ENCODE measurements at regions of chr19 and their contacts with region 1.

Region 1: GRCh38 chr19:51108066-51108804 is at the start of gene CTU1:
- DNase-seq: peak; percentile 97 to 100 (median 99)
- H3K4me3 ChIP-seq: peak within 1 kb of the TSS; percentile 59 to 96 (median 84)
- H3K27ac ChIP-seq: peak within 1 kb of the TSS in 55 of 59 donors; percentile 5 to 95 (median 77)
- H3K27me3 ChIP-seq: peaks cover 0 to 4% (median 0%) of the 10 kb centered on the region in 45 donors
- CTCF ChIP-seq: peak in 41 of 56 donors; percentile 5 to 64 (median 36)
- total RNA-seq, gene CTU1: 4.6 to 14.6 (median 7.5) TPM

Region 2: GRCh38 chr19:50025024-50025789 is 1083.0 kb before region 1 on chr19 and contains the start of gene VRK3:
- intact Hi-C with region 1: loop called in 1 of 2 experiments (anchors 10 kb)
- DNase-seq: peak; percentile 99 to 100 (median 99)
- H3K4me3 ChIP-seq: peak within 1 kb of the TSS; percentile 61 to 100 (median 96)
- H3K27ac ChIP-seq: peak within 1 kb of the TSS; percentile 24 to 97 (median 88)
- H3K27me3 ChIP-seq: no peaks in the 10 kb centered on the region
- CTCF ChIP-seq: peak in 37 of 56 donors; percentile 4 to 47 (median 25)
- total RNA-seq, gene VRK3: 38.8 to 67.5 (median 53.3) TPM

Region 3: GRCh38 chr19:50329146-50329925 is 778.9 kb before region 1 on chr19 and contains the start of gene KCNC3:
- intact Hi-C with region 1: loop called in 1 of 2 experiments (anchors 2 kb)
- DNase-seq: peak; percentile 97 to 100 (median 100)
- H3K4me3 ChIP-seq: peak within 1 kb of the TSS; percentile 39 to 84 (median 58)
- H3K27ac ChIP-seq: peak within 1 kb of the TSS in 58 of 59 donors; percentile 38 to 93 (median 82)
- H3K27me3 ChIP-seq: no peaks in the 10 kb centered on the region
- CTCF ChIP-seq: peak in 17 of 56 donors; percentile 5 to 50 (median 20)
- total RNA-seq, gene KCNC3: 15.1 to 99.8 (median 56.4) TPM

Region 4: DNA sequence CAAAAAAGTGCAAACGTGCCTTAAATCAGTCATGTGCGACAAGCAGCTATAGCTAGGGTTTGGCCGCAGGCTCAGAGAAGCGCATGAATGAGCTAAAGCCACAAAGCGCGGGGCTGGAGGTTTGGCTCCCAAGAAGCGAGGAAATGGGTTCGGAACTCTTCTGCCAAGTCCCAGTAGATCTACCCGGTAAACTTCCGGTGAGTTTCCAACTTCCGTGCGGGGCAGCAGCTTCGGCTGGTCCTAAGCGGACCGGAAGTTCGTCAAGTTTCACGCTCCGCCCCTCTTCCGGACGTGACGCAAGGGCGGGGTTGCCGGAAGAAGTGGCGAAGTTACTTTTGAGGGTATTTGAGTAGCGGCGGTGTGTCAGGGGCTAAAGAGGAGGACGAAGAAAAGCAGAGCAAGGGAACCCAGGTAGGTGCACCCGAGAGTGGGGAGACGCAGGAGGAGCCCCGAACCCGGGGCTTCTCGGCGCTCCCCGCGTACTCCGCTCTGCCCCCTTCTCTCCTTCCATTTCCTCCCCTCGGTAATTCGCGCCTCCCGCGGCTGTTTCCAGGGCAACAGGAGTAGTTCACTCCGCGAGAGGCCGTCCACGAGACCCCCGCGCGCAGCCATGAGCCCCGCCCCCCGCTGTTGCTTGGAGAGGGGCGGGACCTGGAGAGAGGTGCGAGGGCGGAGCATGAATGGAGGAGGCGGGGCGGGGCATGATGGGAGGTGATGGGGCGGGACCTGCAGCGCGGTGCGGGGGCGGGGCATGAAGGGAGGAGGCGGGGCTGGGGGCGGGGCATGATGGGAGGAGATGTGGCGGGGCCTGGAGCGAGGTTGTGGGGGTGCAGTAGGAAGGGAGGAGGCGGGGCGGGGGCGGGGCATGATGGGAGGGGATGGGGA is 731.8 kb before region 1 on chr19 and contains the start of gene NR1H2:
- intact Hi-C with region 1: loop called in 1 of 2 experiments (anchors 5 kb)
- DNase-seq: peak; percentile 94 to 97 (median 96)
- H3K4me3 ChIP-seq: peak within 1 kb of the TSS; percentile 73 to 100 (median 98)
- H3K27ac ChIP-seq: peak within 1 kb of the TSS; percentile 86 to 100 (median 97)
- H3K27me3 ChIP-seq: no peaks in the 10 kb centered on the region
- CTCF ChIP-seq: peak in 36 of 56 donors; percentile 3 to 57 (median 32)
- total RNA-seq, gene NR1H2: 47.4 to 83.8 (median 64.3) TPM

Region 5: DNA sequence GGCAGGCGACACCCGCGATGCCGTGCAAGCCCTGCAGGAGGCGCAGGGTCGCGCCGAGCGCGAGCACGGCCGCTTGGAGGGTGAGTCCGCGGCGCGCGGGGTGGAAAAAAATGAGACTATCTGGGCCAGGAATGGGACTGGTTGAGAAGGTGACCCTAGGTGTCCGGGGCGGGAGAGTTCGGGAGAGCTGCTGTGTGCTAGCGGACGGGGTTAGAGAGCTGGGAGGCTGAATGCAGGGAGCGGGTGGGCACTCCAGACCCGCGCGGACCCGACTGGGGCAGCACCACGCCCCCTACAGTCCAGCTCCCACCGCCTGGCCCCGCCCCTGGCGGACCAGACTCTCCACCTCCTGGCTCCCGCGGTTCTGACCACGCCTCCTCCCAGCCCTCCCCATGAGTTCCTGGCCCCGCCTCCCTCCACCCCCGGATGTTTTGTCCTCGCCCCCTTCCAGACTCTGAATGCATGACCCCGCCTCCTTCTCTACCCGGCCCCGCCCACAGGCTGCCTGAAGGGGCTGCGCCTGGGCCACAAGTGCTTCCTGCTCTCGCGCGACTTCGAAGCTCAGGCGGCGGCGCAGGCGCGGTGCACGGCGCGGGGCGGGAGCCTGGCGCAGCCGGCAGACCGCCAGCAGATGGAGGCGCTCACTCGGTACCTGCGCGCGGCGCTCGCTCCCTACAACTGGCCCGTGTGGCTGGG is 383.6 kb before region 1 on chr19:
- intact Hi-C with region 1: loop called in 1 of 2 experiments (anchors 5 kb)
- DNase-seq: peak; percentile 99 to 100 (median 99)
- H3K4me3 ChIP-seq: peak overlapping the region; percentile 60 to 93 (median 84)
- H3K27ac ChIP-seq: peak overlapping the region in 57 of 59 donors; percentile 41 to 90 (median 78)
- H3K27me3 ChIP-seq: no peaks in the 10 kb centered on the region
- CTCF ChIP-seq: peak; percentile 40 to 95 (median 72)

Region 6: DNA sequence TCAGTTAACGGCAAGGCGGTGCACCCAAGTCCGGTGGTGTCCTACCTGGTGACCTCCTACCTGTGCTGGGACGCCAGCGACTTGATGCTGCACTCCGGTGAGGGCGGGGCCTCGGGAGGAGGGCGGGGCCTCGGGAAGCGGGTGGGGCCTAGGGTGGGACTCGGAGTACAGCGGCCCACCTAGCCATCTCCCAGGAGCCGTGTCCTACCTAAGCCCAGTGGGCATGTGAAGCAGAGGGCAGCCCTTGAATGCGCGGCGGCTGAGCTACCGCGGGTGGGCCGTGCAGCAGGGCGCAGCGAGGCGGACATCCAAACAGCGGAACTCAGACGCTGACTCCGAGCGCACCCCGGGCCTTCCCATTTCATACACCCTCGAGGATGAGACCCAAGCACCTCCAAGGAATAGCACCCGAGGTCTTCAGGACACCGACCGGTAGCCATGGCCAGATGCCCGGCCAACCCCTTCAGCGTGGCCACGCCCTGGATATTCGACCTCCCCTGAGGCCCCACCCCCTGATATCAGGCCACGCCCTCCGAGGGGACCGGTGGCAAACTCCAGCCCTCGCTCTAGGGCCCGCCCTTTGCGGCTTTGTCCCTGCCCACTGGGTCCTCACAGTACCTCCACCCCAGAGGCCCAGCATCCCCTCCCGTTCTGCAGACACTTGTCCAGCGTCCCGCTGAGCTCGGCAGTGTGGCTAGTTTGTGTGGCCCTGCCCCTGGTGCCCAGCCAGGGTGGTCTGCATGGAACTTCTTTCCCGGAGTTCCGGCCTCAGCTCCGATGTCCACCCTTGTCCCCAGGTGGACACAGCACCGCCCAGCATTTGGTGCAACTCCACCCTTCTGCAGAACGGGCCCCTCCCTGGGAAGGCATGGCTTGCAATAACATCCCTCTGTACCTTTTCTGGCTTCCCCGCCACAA is 290.0 kb before region 1 on chr19:
- intact Hi-C with region 1: no loop called
- DNase-seq: no peak
- H3K4me3 ChIP-seq: peak overlapping the region in 27 of 59 donors; percentile 2 to 55 (median 24)
- H3K27ac ChIP-seq: no peak overlapping the region
- H3K27me3 ChIP-seq: peaks cover 0 to 74% (median 51%) of the 10 kb centered on the region in 45 donors
- CTCF ChIP-seq: no peak

Region 7: DNA sequence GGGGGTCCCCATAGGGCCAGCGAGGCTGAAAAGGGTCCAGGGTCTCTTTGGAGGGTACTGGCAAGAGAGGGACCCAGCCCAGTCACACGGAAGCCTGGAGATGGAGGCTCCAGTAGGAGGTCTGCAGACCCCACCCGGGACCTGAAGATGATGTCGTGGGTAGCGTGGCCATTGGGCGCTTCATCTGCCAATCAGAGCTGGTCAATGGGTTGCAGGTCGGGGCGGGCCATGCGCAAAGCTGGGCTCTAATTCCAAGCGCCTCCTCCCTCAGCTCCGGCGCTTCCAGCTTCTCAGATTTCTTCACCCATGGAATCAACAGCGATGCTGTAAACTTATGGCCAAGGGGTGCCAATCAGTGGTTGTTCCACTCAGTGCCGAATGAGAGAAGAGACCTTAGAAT is 382.4 kb after region 1 on chr19:
- intact Hi-C with region 1: no loop called
- DNase-seq: no peak
- H3K4me3 ChIP-seq: no peak overlapping the region
- H3K27ac ChIP-seq: no peak overlapping the region
- H3K27me3 ChIP-seq: peaks cover 0 to 32% (median 7%) of the 10 kb centered on the region in 45 donors
- CTCF ChIP-seq: no peak

Region 8: GRCh38 chr19:51570962-51571575 is 462.8 kb after region 1 on chr19 and contains the start of gene ZNF175:
- intact Hi-C with region 1: loop called in 1 of 2 experiments (anchors 5 kb)
- DNase-seq: peak; percentile 89 to 97 (median 94)
- H3K4me3 ChIP-seq: peak within 1 kb of the TSS; percentile 57 to 90 (median 77)
- H3K27ac ChIP-seq: peak within 1 kb of the TSS in 32 of 59 donors; percentile 1 to 79 (median 52)
- H3K27me3 ChIP-seq: peaks cover 0 to 10% (median 0%) of the 10 kb centered on the region in 45 donors
- CTCF ChIP-seq: peak in 37 of 56 donors; percentile 11 to 64 (median 35)
- total RNA-seq, gene ZNF175: 13.2 to 30.4 (median 19.9) TPM

Region 9: GRCh38 chr19:51593969-51594773 is 485.9 kb after region 1 on chr19:
- intact Hi-C with region 1: loop called (anchors 1 to 2 kb)
- DNase-seq: peak; percentile 99 to 100 (median 99)
- H3K4me3 ChIP-seq: peak overlapping the region; percentile 50 to 98 (median 80)
- H3K27ac ChIP-seq: peak overlapping the region in 56 of 59 donors; percentile 23 to 96 (median 85)
- H3K27me3 ChIP-seq: peaks cover 0 to 8% (median 0%) of the 10 kb centered on the region in 45 donors
- CTCF ChIP-seq: peak in 31 of 56 donors; percentile 1 to 58 (median 34)